Activated CD8-positive, alpha-beta memory T cell treated with anti-CD3 and anti-CD28 coated beads, Interleukin-2, amount 10 ng/mL, durations not matched to agents 7 days and 5 days (primary cell): ENCODE measurements at regions of chr3 and their contacts with region 1.

Region 1: DNA sequence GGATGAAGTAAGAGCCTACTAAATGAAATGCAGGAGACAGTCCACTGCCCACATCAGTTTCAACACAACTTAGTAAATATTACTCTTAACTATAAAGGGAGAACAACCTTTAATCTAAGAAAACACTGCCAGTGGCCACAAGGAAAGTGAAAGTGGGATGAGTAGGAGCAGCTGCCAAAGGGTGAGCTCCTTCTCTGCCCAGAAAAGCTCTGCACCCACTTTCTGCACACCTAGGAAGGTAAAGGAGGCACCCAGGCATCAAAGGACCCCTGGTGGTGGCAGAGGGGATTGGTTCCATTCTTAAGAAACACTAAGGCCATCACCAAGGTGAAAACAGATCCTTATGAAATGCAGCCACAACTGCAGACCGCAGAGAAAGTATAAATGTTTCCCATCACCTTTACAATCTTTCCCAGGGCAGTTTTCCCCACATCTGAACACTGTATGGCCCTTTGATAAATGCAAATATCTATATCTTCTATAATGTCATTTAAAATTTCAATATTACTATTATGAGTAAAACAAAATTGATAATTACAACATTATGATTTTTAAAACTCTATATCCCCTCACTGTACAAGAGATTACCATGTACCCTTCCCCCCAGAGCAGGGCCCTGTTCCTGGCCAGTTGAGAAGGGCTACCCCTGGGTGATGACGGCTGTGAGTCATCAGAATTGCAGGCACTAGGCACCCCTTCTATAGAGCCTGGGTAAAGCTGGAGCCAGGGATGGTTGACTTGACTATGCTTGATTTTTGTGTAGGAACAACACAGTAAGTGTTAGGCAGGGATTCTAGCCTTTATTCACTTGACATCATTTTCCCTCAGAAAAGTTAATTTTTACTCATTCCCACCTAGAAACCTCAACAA is 92.0 kb downstream of the SNRK start:
- DNase-seq: peak; percentile 80
- ATAC-seq: peak; percentile 94
- H3K4me3 Mint-ChIP-seq: no peak overlapping the region
- H3K27ac Mint-ChIP-seq: peak overlapping the region; percentile 18
- H3K4me1 Mint-ChIP-seq: peaks cover 11% of the 10 kb centered on the region
- H3K27me3 Mint-ChIP-seq: no peaks in the 10 kb centered on the region

Region 2: DNA sequence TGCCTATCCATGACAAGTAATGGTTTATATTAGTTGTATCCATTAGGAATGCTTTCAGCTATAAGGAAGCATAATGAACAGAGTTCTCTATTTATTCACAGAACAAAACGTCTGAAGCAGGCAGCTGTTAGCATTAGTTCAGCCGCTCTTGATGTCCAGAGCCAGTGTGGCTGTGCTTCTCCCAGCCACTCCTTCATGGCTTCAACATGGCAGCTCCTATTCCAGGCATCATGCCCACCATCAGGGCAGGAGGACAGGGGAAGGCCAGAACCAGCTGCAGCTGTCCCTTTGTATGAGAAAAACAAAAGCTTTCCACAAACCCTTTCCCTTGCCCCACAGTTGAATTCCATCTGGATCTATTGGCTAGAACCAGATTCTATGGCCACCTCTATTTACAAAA is 104.9 kb before region 1 on chr3:
- CTCF ChIA-PET with region 1: no interaction called
- DNase-seq: no peak
- ATAC-seq: no peak
- H3K4me3 Mint-ChIP-seq: no peak overlapping the region
- H3K27ac Mint-ChIP-seq: no peak overlapping the region
- H3K4me1 Mint-ChIP-seq: peaks cover 3% of the 10 kb centered on the region
- H3K27me3 Mint-ChIP-seq: no peaks in the 10 kb centered on the region

Region 3: DNA sequence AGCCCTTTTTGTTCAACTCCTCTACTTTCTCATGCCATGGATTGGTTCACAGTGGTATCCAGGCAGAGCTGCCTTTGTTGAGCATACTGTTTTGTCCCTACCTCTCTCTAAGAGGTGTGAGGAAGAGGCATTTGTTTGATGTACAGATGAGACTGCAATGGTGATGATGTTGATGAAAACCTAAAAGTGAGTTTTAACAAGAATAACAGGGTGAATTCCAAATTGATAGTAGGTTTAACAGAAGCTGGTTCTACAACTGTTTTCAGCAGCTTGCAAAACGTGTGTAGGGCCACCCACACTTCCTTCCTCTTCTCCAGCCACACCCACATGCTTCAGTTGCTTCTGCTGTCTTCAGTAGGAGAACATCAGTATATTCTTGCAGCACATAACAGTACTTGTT is 81.7 kb before region 1 on chr3:
- CTCF ChIA-PET with region 1: interaction called, 12 read pairs
- DNase-seq: peak; percentile 81
- ATAC-seq: peak; percentile 93
- H3K4me3 Mint-ChIP-seq: peak overlapping the region; percentile 74
- H3K27ac Mint-ChIP-seq: peak overlapping the region; percentile 87
- H3K4me1 Mint-ChIP-seq: peaks cover 73% of the 10 kb centered on the region
- H3K27me3 Mint-ChIP-seq: no peaks in the 10 kb centered on the region

Region 4: GRCh38 chr3:43389388-43390254 is 11.3 kb after region 1 on chr3:
- CTCF ChIA-PET with region 1: interaction called, 15 read pairs
- DNase-seq: peak; percentile 90
- ATAC-seq: peak; percentile 95
- H3K4me3 Mint-ChIP-seq: peak overlapping the region; percentile 37
- H3K27ac Mint-ChIP-seq: peak overlapping the region; percentile 93
- H3K4me1 Mint-ChIP-seq: peaks cover 30% of the 10 kb centered on the region
- H3K27me3 Mint-ChIP-seq: no peaks in the 10 kb centered on the region

Region 5: GRCh38 chr3:43503067-43503728 is 124.9 kb after region 1 on chr3:
- CTCF ChIA-PET with region 1: interaction called, 13 read pairs
- DNase-seq: no peak
- ATAC-seq: no peak
- H3K4me3 Mint-ChIP-seq: no peak overlapping the region
- H3K27ac Mint-ChIP-seq: no peak overlapping the region
- H3K4me1 Mint-ChIP-seq: peaks cover 24% of the 10 kb centered on the region
- H3K27me3 Mint-ChIP-seq: no peaks in the 10 kb centered on the region